Caco-2 (cell line): ENCODE measurements at regions of chr11 and their contacts with region 1.

Region 1: GRCh38 chr11:65888163-65888814 is at the start of gene FIBP:
- DNase-seq: peak; percentile 98
- H3K4me3 ChIP-seq: peak within 1 kb of the TSS; percentile 68
- H3K4me3 Mint-ChIP-seq: peak within 1 kb of the TSS; percentile 82
- H3K27ac Mint-ChIP-seq: peak within 1 kb of the TSS; percentile 69
- H3K4me1 ChIP-seq: peaks cover 31% of the 10 kb centered on the region
- H3K4me1 Mint-ChIP-seq: peaks cover 33% of the 10 kb centered on the region
- H3K27me3 ChIP-seq: no peaks in the 10 kb centered on the region
- H3K27me3 Mint-ChIP-seq: no peaks in the 10 kb centered on the region
- CTCF ChIP-seq: peak; percentile 76 to 93
- total RNA-seq, gene FIBP: 56.8 and 61.5 TPM in 2 replicates

Region 2: DNA sequence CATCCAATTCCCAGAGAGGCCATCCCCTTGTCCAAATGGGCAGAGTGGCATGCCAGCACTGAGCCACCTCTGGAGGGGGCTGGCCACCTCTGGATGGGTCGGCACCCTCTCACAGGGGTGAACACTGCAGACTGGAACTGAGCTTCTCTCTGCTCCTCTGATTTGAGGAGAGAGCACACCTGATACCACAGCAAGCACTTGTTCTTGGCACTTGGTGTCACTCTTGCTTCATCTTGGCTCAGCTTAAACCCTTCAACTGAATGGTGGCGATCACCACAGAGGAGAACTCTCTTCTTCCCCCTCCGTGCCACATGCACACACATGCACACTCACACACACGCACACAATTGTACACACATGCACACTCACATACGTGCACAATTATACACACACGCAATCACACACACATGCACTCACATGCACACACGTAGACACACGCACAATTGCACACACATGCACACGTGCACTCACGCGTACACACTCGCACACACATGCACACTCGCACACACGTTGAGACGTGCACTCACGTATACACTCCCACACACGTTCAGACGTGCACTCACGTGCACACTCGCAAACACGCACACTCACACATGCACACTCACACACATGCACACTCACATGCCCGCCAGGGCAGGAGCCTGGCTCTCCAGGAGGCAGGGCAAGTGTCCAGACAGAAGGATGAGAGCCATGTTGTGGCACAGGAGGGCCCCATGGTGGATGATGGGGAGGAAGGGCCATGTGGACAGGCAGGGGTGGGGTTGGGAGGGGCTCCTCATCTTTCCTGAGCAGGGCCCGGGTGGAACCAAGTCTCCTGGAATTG is 78.0 kb before region 1 on chr11:
- CTCF ChIA-PET with region 1: interaction called, 19 read pairs
- POLR2A ChIA-PET with region 1: no interaction called
- intact Hi-C with region 1: no loop called
- DNase-seq: no peak
- H3K4me3 ChIP-seq: no peak overlapping the region
- H3K4me3 Mint-ChIP-seq: no peak overlapping the region
- H3K27ac Mint-ChIP-seq: no peak overlapping the region
- H3K4me1 ChIP-seq: peaks cover 21% of the 10 kb centered on the region
- H3K4me1 Mint-ChIP-seq: peaks cover 29% of the 10 kb centered on the region
- H3K27me3 ChIP-seq: no peaks in the 10 kb centered on the region
- H3K27me3 Mint-ChIP-seq: peaks cover 2% of the 10 kb centered on the region
- CTCF ChIP-seq: no peak

Region 3: DNA sequence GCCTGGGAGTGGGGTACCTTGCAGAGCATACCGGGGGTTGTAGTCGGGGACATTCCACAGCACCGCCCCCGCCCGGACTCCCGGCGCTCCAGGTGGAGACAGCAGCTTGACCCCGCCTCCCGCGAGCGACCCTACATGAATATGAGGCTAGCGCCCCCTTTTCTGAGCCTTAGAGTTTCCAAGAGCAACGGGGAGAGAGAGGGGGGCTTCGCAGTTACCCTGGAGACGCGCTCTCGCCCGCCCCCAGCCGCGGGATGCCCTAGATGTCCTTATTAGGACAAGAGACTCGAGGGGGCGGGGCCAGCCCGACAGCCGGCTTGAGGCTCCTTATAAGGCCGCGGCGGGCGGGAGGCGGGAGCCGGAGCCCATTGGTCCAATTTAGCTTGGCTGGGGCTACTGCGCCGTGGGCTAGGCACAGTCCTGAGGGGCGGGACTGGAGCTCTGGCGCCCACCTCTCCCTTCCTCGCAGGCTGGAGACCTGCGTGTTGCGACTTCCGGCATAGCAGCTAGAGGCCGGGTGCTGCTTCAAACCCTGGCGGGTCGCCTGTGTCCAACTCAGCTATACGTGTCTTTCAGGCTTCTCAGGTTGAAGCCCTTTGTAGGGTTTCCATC is 29.0 kb before region 1 on chr11:
- CTCF ChIA-PET with region 1: interaction called, 241 read pairs
- POLR2A ChIA-PET with region 1: interaction called, 43 read pairs
- intact Hi-C with region 1: loop called (anchors 1 kb)
- DNase-seq: peak; percentile 98 to 99
- H3K4me3 ChIP-seq: peak overlapping the region; percentile 87
- H3K4me3 Mint-ChIP-seq: peak overlapping the region; percentile 97
- H3K27ac Mint-ChIP-seq: peak overlapping the region; percentile 95
- H3K4me1 ChIP-seq: peaks cover 15% of the 10 kb centered on the region
- H3K4me1 Mint-ChIP-seq: peaks cover 30% of the 10 kb centered on the region
- H3K27me3 ChIP-seq: no peaks in the 10 kb centered on the region
- H3K27me3 Mint-ChIP-seq: no peaks in the 10 kb centered on the region
- CTCF ChIP-seq: peak in 1 of 2 experiments; percentile 31

Region 4: GRCh38 chr11:65900125-65900898 is 12.0 kb after region 1 on chr11 and contains the start of gene FOSL1:
- CTCF ChIA-PET with region 1: interaction called, 36 read pairs
- POLR2A ChIA-PET with region 1: interaction called, 27 read pairs
- intact Hi-C with region 1: loop called (anchors 1 kb)
- DNase-seq: peak; percentile 97
- H3K4me3 ChIP-seq: peak within 1 kb of the TSS; percentile 75
- H3K4me3 Mint-ChIP-seq: peak within 1 kb of the TSS; percentile 79
- H3K27ac Mint-ChIP-seq: peak within 1 kb of the TSS; percentile 76
- H3K4me1 ChIP-seq: peaks cover 29% of the 10 kb centered on the region
- H3K4me1 Mint-ChIP-seq: peaks cover 22% of the 10 kb centered on the region
- H3K27me3 ChIP-seq: no peaks in the 10 kb centered on the region; the same call in 1 of the 2 replicates
- H3K27me3 Mint-ChIP-seq: no peaks in the 10 kb centered on the region
- CTCF ChIP-seq: no peak
- total RNA-seq, gene FOSL1: 2.7 and 3.9 TPM in 2 replicates

Region 5: DNA sequence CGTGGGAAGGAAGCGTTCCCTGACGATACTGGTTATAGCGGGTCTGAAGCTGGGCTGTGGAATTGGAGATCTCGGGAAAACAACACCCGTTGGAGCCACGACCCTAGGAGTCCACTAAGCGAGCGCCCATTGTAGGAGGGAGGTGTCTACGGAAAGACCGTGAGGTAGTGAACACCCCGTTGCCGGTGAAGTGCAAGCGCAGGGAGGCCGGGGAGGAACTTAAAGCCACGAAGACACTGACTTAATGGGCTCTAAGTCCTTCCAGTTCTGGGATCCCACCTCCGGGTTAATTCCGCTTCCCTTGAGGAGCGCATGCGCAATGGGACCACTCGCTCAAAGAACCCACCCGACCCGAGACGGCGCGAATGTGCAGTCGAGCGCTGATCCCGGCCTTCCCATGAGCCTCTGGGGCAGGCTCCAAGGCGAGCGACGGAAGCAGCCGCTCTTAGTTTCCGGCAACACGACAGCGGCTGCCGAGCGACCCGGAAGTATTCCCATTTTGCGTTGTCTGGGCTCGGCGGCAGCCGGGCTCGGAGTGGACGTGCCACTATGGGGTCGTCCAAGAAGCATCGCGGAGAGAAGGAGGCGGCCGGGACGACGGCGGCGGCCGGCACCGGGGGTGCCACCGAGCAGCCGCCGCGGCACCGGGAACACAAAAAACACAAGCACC is 73.1 kb after region 1 on chr11 and contains the start of gene SART1:
- CTCF ChIA-PET with region 1: interaction called, 11 read pairs
- POLR2A ChIA-PET with region 1: no interaction called
- intact Hi-C with region 1: loop called (anchors 2 kb)
- DNase-seq: peak; percentile 96 to 98
- H3K4me3 ChIP-seq: peak within 1 kb of the TSS; percentile 94
- H3K4me3 Mint-ChIP-seq: peak within 1 kb of the TSS; percentile 72
- H3K27ac Mint-ChIP-seq: peak within 1 kb of the TSS; percentile 95
- H3K4me1 ChIP-seq: peaks cover 18% of the 10 kb centered on the region
- H3K4me1 Mint-ChIP-seq: peaks cover 13% of the 10 kb centered on the region
- H3K27me3 ChIP-seq: no peaks in the 10 kb centered on the region
- H3K27me3 Mint-ChIP-seq: no peaks in the 10 kb centered on the region
- CTCF ChIP-seq: no peak
- total RNA-seq, gene SART1: 78.0 and 84.5 TPM in 2 replicates

Region 6: GRCh38 chr11:66082946-66083698 is 194.8 kb after region 1 on chr11:
- CTCF ChIA-PET with region 1: interaction called, 13 read pairs
- POLR2A ChIA-PET with region 1: no interaction called
- intact Hi-C with region 1: no loop called
- DNase-seq: no peak
- H3K4me3 ChIP-seq: no peak overlapping the region
- H3K4me3 Mint-ChIP-seq: no peak overlapping the region
- H3K27ac Mint-ChIP-seq: no peak overlapping the region
- H3K4me1 ChIP-seq: peaks cover 47% of the 10 kb centered on the region
- H3K4me1 Mint-ChIP-seq: peaks cover 32% of the 10 kb centered on the region
- H3K27me3 ChIP-seq: no peaks in the 10 kb centered on the region
- H3K27me3 Mint-ChIP-seq: no peaks in the 10 kb centered on the region
- CTCF ChIP-seq: no peak

Region 7: GRCh38 chr11:66579017-66579606 is 690.8 kb after region 1 on chr11:
- CTCF ChIA-PET with region 1: no interaction called
- POLR2A ChIA-PET with region 1: no interaction called
- intact Hi-C with region 1: no loop called
- DNase-seq: peak; percentile 75 to 85
- H3K4me3 ChIP-seq: no peak overlapping the region
- H3K4me3 Mint-ChIP-seq: no peak overlapping the region
- H3K27ac Mint-ChIP-seq: no peak overlapping the region
- H3K4me1 ChIP-seq: no peaks in the 10 kb centered on the region
- H3K4me1 Mint-ChIP-seq: peaks cover 15% of the 10 kb centered on the region
- H3K27me3 ChIP-seq: no peaks in the 10 kb centered on the region; the same call in 1 of the 2 replicates
- H3K27me3 Mint-ChIP-seq: peaks cover 6% of the 10 kb centered on the region
- CTCF ChIP-seq: peak; percentile 88 to 95